Esophagus squamous epithelium (tissue), 5 donors: ENCODE measurements at regions of chr3 and their contacts with region 1.

Region 1: DNA sequence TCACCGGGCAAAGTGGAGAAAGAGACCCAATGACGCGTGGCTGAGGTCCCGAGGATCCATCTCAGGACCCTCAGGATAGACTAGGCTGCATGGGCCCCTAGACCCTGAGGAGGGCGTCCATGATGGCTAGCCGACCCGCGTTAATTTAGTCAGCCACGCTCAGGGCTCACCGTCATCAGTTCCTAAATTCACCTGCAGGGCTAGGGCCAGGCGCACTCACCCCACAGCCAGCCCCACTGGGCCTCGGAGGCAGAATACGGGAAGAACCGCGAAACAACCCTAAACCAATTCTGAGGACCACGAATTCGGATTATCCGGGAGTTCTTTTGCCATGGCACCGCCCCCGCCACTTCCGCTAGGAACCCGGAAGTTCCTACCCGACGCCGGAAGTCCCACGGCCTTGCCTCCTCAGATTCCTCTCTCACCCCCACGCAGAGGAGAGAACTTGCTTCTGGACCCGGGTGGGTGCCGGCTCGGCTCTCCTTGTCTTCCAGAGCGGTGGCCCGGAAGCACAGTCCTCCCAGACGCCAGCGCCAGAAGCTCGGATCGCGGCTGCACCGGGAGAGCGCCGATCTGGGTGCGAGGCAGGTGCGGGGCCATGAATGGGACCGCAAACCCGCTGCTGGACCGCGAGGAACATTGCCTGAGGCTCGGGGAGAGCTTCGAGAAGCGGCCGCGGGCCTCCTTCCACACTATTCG is at the starts of genes EAF1 and METTL6:
- DNase-seq: peak; percentile 17
- H3K4me3 ChIP-seq: peak within 1 kb of the TSS; percentile 71 to 97 (median 88)
- H3K27ac ChIP-seq: peak within 1 kb of the TSS; percentile 76 to 92 (median 89)
- H3K4me1 ChIP-seq: peaks cover 4 to 63% (median 20%) of the 10 kb centered on the region in 3 donors
- H3K27me3 ChIP-seq: no peaks in the 10 kb centered on the region
- CTCF ChIP-seq: peak in 4 of 6 experiments; percentile 14 to 45 (median 25)
- POLR2A ChIP-seq: peak in 1 of 4 donors; percentile 29
- total RNA-seq, gene EAF1: 15.8 to 23.5 (median 21.0) TPM
- total RNA-seq, gene METTL6: 5.8 to 16.4 (median 12.9) TPM

Region 2: GRCh38 chr3:15291589-15292541 is 135.5 kb before region 1 on chr3:
- intact Hi-C with region 1: no loop called
- DNase-seq: no peak
- H3K4me3 ChIP-seq: no peak overlapping the region
- H3K27ac ChIP-seq: peak overlapping the region in 3 of 4 donors; percentile 67 to 76 (median 74)
- H3K4me1 ChIP-seq: peaks cover 16 to 80% (median 40%) of the 10 kb centered on the region in 3 donors
- H3K27me3 ChIP-seq: no peaks in the 10 kb centered on the region
- CTCF ChIP-seq: no peak
- POLR2A ChIP-seq: no peak

Region 3: DNA sequence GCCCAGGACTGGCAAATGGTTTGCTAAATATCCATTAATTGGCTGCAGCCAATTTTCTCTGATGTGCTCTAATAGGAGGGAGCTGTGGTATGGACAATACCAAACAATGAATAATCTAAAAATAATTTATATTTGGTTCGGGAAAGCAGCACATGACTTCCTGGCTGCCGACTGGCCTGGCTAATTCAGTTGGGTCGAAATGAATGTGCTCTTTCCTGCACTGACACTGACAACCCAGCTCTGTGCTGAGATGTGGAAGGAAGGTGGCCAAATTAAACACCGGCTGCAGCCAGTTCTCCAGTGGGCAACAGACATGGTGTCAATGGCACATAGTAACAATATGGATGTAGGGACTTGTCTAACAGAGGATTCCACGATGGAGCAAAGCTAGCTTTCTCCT is 115.3 kb after region 1 on chr3:
- intact Hi-C with region 1: no loop called
- DNase-seq: no peak
- H3K4me3 ChIP-seq: no peak overlapping the region
- H3K27ac ChIP-seq: no peak overlapping the region
- H3K4me1 ChIP-seq: peaks cover 0 to 9% (median 0%) of the 10 kb centered on the region in 3 donors
- H3K27me3 ChIP-seq: no peaks in the 10 kb centered on the region
- CTCF ChIP-seq: no peak
- POLR2A ChIP-seq: no peak

Region 4: GRCh38 chr3:15562560-15562959 is 135.2 kb after region 1 on chr3:
- intact Hi-C with region 1: loop called (anchors 10 kb)
- DNase-seq: no peak
- H3K4me3 ChIP-seq: no peak overlapping the region
- H3K27ac ChIP-seq: no peak overlapping the region
- H3K4me1 ChIP-seq: peaks cover 0 to 33% (median 0%) of the 10 kb centered on the region in 3 donors
- H3K27me3 ChIP-seq: no peaks in the 10 kb centered on the region
- CTCF ChIP-seq: no peak
- POLR2A ChIP-seq: no peak